HEK293 (cell line): ENCODE measurements at regions of chr6 and their contacts with region 1.

Region 1: DNA sequence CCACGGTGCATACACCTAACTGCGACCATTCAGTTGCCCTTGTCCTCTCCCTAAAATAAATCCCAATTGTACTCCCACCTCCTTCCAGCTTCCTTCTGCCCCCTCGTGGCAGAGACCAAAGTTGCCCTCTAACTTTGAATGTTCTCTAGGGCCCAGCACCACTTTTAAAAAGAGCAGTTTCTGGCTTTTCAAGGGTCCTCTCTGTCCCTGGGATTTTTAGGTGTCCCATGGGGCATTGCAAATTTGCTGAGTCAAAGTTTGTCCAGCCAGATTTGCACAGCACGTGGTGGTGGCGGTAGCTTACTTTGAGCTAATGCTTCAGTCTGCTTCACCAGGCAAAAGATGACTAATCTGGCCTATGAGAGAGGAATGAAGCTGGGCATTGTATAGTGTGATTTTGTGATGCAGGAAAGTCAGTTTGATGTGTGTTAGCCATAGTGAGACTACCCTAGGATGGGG is 100.2 kb downstream of the PERP start:
- H3K4me3 ChIP-seq: no peak overlapping the region
- H3K27ac ChIP-seq: no peak overlapping the region
- H3K4me1 ChIP-seq: no peaks in the 10 kb centered on the region
- CTCF ChIP-seq: peak; percentile 48; the same call in 1 of the 2 replicates

Region 2: GRCh38 chr6:138025528-138025978 is 18.5 kb after region 1 on chr6:
- CTCF ChIA-PET with region 1: interaction called, 20 read pairs
- POLR2A ChIA-PET with region 1: no interaction called
- H3K4me3 ChIP-seq: no peak overlapping the region
- H3K27ac ChIP-seq: no peak overlapping the region
- H3K4me1 ChIP-seq: no peaks in the 10 kb centered on the region
- CTCF ChIP-seq: no peak

Region 3: GRCh38 chr6:138031850-138032249 is 24.8 kb after region 1 on chr6:
- CTCF ChIA-PET with region 1: interaction called, 20 read pairs
- POLR2A ChIA-PET with region 1: no interaction called
- H3K4me3 ChIP-seq: no peak overlapping the region
- H3K27ac ChIP-seq: no peak overlapping the region
- H3K4me1 ChIP-seq: 0 out of 2 replicates have a peak, but pooled peaks cover 6% of the 10 kb centered on the region
- CTCF ChIP-seq: no peak

Region 4: GRCh38 chr6:138086573-138087196 is 79.6 kb after region 1 on chr6:
- CTCF ChIA-PET with region 1: interaction called, 10 read pairs
- POLR2A ChIA-PET with region 1: no interaction called
- H3K4me3 ChIP-seq: no peak overlapping the region
- H3K27ac ChIP-seq: peak overlapping the region; percentile 50
- H3K4me1 ChIP-seq: peaks cover 35% of the 10 kb centered on the region
- CTCF ChIP-seq: no peak

Region 5: GRCh38 chr6:139016337-139017213 is 1009.5 kb after region 1 on chr6:
- CTCF ChIA-PET with region 1: no interaction called
- POLR2A ChIA-PET with region 1: no interaction called
- H3K4me3 ChIP-seq: no peak overlapping the region
- H3K27ac ChIP-seq: no peak overlapping the region
- H3K4me1 ChIP-seq: no peaks in the 10 kb centered on the region; the same call in 1 of the 2 replicates
- CTCF ChIP-seq: no peak